ENCODE measurements at regions of chr3 and their contacts with region 1.

Region 1: DNA sequence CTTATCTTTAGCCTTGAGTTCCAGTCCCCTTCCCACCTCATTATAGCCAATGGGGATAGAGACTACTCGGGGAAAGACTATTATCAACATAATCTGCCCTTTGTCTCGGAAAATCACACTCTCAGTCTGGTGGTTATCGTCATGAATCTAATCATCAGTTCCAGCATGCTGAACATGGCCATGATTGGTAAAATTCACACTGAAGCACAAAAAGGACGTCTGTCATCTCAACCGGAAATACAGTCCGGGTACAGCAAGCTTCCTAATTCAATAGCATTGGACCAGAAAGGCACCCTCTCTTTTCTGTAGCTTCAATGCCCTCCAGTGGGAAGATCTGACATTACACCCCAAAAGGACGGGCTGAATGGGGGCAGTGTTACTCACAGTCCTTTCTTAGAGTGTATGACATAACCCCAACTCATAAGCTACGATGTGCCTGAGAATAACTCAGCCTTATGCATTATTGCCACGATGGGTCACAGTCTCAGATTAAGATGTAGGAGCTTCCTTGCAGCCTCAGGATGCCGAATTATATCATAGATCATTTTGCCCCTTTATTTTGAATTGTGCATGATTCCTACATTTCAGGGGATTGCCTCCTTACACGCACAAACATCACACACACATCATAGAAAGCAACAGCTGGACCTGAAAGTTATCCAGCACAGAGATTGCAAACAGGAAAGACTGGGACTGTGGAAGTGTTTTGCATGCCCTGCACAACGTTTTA is 390.4 kb upstream of the LMCD1 start:
- DNase-seq: no peak
- H3K4me3 ChIP-seq: peak overlapping the region in 2 of 4 donors; percentile 2 to 18
- H3K27ac ChIP-seq: no peak overlapping the region
- H3K4me1 ChIP-seq: peaks cover 0 to 3% (median 0%) of the 10 kb centered on the region in 4 donors
- H3K27me3 ChIP-seq: no peaks in the 10 kb centered on the region
- CTCF ChIP-seq: peak; percentile 32 to 69 (median 54)
- EP300 ChIP-seq: no peak
- POLR2A ChIP-seq: no peak

Region 2: GRCh38 chr3:6791161-6791560 is 1320.1 kb before region 1 on chr3:
- intact Hi-C with region 1: loop called (anchors 5 kb)
- DNase-seq: no peak
- H3K4me3 ChIP-seq: no peak overlapping the region
- H3K27ac ChIP-seq: no peak overlapping the region
- H3K4me1 ChIP-seq: no peaks in the 10 kb centered on the region
- H3K27me3 ChIP-seq: no peaks in the 10 kb centered on the region
- CTCF ChIP-seq: peak in 1 of 4 experiments; percentile 25
- EP300 ChIP-seq: no peak
- POLR2A ChIP-seq: no peak

Measured in sigmoid colon (tissue), 7 donors.